ENCODE measurements at regions of chr4 and their contacts with region 1.

Region 1: DNA sequence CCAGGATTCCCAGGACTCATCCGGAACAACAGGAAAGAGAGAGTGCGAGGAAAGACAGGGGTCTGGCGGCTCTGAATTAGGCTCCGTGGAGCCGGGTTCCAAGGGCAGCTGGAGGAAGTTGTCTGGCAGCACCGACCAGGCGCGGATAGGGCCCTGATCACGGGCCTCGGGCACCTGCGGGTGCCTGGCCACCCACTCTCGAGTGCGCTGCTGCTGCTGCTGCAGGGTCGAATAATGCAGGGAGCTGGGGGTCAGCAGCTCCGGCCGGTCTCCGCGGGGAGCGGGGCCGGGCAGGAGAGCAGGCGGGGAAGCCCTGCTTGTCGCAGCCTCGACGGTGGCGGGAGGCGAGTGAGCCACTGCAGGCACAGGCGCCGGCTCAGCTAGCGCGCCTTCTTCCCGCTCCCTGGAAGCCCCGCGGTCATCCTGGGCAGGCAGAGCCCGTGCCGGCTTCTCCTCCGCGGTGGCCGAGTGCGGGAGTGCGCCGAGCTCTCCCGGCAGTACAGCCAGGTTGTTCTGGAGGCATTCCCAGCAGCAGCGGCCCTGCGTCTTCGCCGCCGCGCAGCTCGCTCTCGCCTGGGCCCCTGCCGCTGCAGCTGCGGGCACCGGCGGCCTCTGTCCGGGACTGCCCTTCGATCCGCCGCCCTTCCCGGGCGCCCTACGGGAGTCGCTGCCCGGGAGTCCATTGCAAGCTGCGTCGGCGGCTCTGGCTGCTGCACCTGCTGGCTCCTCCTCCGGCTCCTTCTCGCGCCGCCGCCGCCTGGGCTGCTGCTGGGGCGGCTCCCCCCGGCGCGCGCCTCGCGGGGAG is 1.0 kb downstream of the SOWAHB start:
- DNase-seq: peak; percentile 16
- H3K4me3 Mint-ChIP-seq: no peak overlapping the region
- H3K27ac Mint-ChIP-seq: no peak overlapping the region
- H3K4me1 Mint-ChIP-seq: peaks cover 9% of the 10 kb centered on the region
- H3K27me3 Mint-ChIP-seq: peaks cover 35% of the 10 kb centered on the region

Region 2: GRCh38 chr4:76879731-76880364 is 17.1 kb before region 1 on chr4:
- CTCF ChIA-PET with region 1: no interaction called
- intact Hi-C with region 1: loop called (anchors 2 kb)
- DNase-seq: no peak
- H3K4me3 Mint-ChIP-seq: no peak overlapping the region
- H3K27ac Mint-ChIP-seq: no peak overlapping the region
- H3K4me1 Mint-ChIP-seq: no peaks in the 10 kb centered on the region
- H3K27me3 Mint-ChIP-seq: peaks cover 7% of the 10 kb centered on the region

Region 3: GRCh38 chr4:77248810-77249209 is 351.9 kb after region 1 on chr4:
- CTCF ChIA-PET with region 1: no interaction called
- intact Hi-C with region 1: no loop called
- DNase-seq: no peak
- H3K4me3 Mint-ChIP-seq: no peak overlapping the region
- H3K27ac Mint-ChIP-seq: no peak overlapping the region
- H3K4me1 Mint-ChIP-seq: no peaks in the 10 kb centered on the region
- H3K27me3 Mint-ChIP-seq: peaks cover 4% of the 10 kb centered on the region

Measured in activated naive CD4-positive, alpha-beta T cell treated with anti-CD3 and anti-CD28 coated beads for 36 hours (primary cell).